ENCODE measurements at regions of chr15 and their contacts with region 1.

Region 1: DNA sequence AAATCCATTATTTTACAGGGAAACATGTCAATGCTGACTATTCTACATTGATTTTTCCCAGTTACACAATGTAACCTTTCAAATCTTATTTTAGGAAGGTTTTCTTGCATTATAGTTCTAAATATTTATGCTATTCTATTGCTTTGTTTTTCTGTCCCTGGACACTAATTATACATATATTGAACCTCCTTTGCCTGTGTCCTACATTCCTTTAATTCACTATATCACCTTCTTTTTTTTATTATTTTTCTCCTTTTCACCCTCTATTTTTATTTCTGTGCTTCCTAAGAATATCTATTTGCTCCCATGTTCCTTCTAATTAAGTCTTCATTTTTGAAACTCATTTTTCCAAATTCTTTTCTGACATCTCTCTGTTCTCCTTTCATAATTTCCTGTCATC is 259.2 kb downstream of the TJP1 start:
- DNase-seq: no peak
- H3K4me3 ChIP-seq: no peak overlapping the region
- H3K27ac ChIP-seq: no peak overlapping the region
- H3K4me1 ChIP-seq: no peaks in the 10 kb centered on the region
- H3K27me3 ChIP-seq: peaks cover 0 to 38% (median 12%) of the 10 kb centered on the region in 7 donors
- CTCF ChIP-seq: no peak
- POLR2A ChIP-seq: no peak

Region 2: DNA sequence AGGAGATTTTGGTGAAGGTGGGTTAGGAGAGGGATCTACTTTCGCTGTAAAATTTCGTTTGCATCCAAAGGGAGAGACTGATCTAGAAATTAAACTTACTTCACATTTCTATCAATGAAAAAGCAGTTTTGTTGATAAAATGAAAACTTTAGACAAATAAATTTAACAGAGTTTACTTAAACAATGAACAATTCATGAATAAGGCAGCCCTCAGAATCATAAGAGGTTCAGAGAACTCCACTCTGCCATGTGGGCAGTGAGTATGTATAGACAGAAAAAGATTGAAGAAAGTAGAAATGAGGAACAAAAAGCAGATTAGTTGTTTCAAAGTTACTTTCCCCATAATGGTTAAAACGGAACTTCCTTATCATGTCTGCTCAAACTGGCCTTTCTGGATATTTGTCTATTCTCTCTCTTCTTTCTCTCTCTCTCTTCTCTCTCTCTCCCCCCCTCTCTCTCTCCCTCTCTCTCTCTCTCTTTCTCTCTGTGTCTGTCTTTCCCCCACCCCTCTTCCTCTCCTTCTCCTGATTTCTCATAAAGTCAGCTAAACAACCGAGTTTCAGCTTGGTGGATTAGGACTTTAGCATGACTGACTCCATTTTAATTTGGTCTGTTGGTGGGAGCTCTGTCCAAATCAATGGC is 10.2 kb after region 1 on chr15:
- intact Hi-C with region 1: loop called (anchors 2 kb)
- DNase-seq: no peak
- H3K4me3 ChIP-seq: no peak overlapping the region
- H3K27ac ChIP-seq: no peak overlapping the region
- H3K4me1 ChIP-seq: peaks cover 0 to 28% (median 14%) of the 10 kb centered on the region in 6 donors
- H3K27me3 ChIP-seq: peaks cover 0 to 73% (median 25%) of the 10 kb centered on the region in 7 donors
- CTCF ChIP-seq: no peak
- POLR2A ChIP-seq: no peak